Dendritic cell treated with granulocyte-macrophage colony-stimulating factor and Interleukin-4, amounts not matched to agents 40 ng/mL and 50 ng/mL, for 4 days (primary cell): ENCODE measurements at regions of chr6 and their contacts with region 1.

Region 1: GRCh38 chr6:10434692-10435376 is 20.0 kb upstream of the TFAP2A start:
- H3K4me3 Mint-ChIP-seq: no peak overlapping the region
- H3K27ac Mint-ChIP-seq: no peak overlapping the region
- H3K4me1 Mint-ChIP-seq: peaks cover 6% of the 10 kb centered on the region
- H3K27me3 Mint-ChIP-seq: peaks cover 24% of the 10 kb centered on the region

Region 2: GRCh38 chr6:8707956-8708772 is 1726.7 kb before region 1 on chr6:
- intact Hi-C with region 1: loop called (anchors 5 kb)
- H3K4me3 Mint-ChIP-seq: no peak overlapping the region
- H3K27ac Mint-ChIP-seq: no peak overlapping the region
- H3K4me1 Mint-ChIP-seq: no peaks in the 10 kb centered on the region
- H3K27me3 Mint-ChIP-seq: no peaks in the 10 kb centered on the region

Region 3: DNA sequence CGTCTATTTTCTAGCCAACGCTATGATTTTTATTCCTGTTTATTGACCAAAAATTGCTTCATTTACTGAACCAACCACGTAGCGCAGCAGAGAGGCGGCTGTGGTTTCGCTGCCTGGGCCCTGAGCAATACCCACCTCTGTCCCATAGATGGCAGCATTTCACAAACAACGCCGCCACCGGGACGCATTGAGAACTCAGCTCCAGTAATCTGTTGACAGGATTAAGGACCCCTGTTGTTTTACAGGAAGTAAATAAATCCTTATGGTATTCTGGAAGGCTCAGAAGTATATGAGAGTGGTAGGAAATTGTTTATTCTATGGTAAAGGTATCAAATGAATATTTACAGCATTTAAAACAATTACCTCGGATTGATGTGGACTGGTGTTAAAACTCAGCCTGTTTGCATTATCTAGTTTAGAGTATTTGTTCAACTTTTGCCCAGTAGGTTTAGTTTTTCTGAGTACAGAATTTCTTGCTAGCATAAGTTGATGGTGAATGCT is 1451.6 kb before region 1 on chr6:
- intact Hi-C with region 1: loop called (anchors 2 kb)
- H3K4me3 Mint-ChIP-seq: no peak overlapping the region
- H3K27ac Mint-ChIP-seq: no peak overlapping the region
- H3K4me1 Mint-ChIP-seq: no peaks in the 10 kb centered on the region
- H3K27me3 Mint-ChIP-seq: no peaks in the 10 kb centered on the region

Region 4: GRCh38 chr6:9540534-9541126 is 894.2 kb before region 1 on chr6:
- intact Hi-C with region 1: loop called (anchors 1 kb)
- H3K4me3 Mint-ChIP-seq: no peak overlapping the region
- H3K27ac Mint-ChIP-seq: no peak overlapping the region
- H3K4me1 Mint-ChIP-seq: no peaks in the 10 kb centered on the region
- H3K27me3 Mint-ChIP-seq: no peaks in the 10 kb centered on the region